Esophagus muscularis mucosa (tissue), 4 donors: ENCODE measurements at regions of chr4 and their contacts with region 1.

Region 1: DNA sequence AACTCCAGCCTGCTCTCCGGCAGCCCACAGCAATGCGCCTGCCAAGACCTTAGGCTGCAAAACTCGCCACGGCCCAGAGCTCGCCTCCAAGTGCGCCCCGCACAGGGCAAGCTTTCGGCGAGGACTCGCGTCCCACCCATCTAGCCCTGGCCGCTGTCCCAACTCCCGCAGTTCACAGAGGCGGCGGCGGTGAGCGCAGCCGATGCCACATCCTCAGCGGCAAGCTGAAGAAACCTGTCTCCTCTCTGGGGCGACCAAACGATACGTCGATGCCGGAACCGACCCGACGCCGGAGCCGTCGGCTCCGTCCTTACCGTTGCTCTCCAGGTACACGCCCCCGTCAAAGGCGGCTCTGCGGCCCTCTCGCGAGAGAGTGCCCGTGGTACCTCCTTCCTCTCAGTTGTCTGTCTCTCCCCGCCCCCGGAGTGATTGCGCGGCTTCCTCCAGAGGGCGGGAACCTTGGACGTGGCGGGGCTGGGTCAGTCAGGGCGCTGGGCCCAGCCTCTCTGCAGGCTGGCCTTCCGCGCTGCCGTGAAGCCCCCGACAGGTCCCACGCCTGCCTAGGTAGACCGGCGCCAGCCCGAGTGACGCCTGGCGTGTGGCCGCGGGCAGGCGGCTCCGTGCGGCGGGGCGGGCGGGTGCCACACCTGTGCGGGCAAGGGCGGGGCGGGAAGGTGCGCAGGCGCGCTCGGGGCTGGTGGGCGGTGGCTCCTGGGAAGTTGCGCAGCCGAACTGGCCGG is 380 bp upstream of the RAB33B start:
- DNase-seq: peak; percentile 99
- H3K4me3 ChIP-seq: peak overlapping the region; percentile 76 to 93 (median 81)
- H3K27ac ChIP-seq: peak overlapping the region; percentile 92 to 99 (median 96)
- H3K4me1 ChIP-seq: peaks cover 36 to 50% (median 49%) of the 10 kb centered on the region in 4 donors
- H3K27me3 ChIP-seq: no peaks in the 10 kb centered on the region
- CTCF ChIP-seq: peak in 1 of 3 experiments; percentile 7
- EP300 ChIP-seq: no peak
- POLR2A ChIP-seq: peak; percentile 63

Region 2: GRCh38 chr4:138707746-138708677 is 745.5 kb before region 1 on chr4:
- intact Hi-C with region 1: no loop called
- DNase-seq: no peak
- H3K4me3 ChIP-seq: no peak overlapping the region
- H3K27ac ChIP-seq: no peak overlapping the region
- H3K4me1 ChIP-seq: no peaks in the 10 kb centered on the region
- H3K27me3 ChIP-seq: no peaks in the 10 kb centered on the region
- CTCF ChIP-seq: no peak
- EP300 ChIP-seq: no peak
- POLR2A ChIP-seq: no peak

Region 3: GRCh38 chr4:139361301-139361700 is 92.2 kb before region 1 on chr4:
- intact Hi-C with region 1: no loop called
- DNase-seq: no peak
- H3K4me3 ChIP-seq: no peak overlapping the region
- H3K27ac ChIP-seq: no peak overlapping the region
- H3K4me1 ChIP-seq: no peaks in the 10 kb centered on the region
- H3K27me3 ChIP-seq: no peaks in the 10 kb centered on the region
- CTCF ChIP-seq: no peak
- EP300 ChIP-seq: no peak
- POLR2A ChIP-seq: no peak

Region 4: DNA sequence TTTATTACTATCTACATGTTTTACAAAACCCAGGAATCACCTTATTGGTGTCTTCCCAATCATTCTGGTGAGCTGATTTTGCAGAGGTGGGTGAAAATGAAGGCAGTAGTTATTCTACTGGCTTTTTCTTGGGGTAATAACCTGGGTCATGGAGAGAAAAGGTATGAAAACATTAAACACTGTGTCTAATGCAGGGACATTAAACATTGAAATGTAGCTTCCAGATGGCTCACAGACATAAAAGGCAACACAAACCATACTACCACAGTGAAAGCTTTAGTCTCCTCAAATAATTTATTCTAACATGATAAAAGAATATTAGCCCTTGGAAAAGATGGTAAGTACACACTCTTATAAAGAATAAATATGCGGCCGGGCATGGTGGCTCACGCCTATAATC is 94.4 kb after region 1 on chr4:
- intact Hi-C with region 1: loop called (anchors 5 kb)
- DNase-seq: no peak
- H3K4me3 ChIP-seq: no peak overlapping the region
- H3K27ac ChIP-seq: no peak overlapping the region
- H3K4me1 ChIP-seq: peaks cover 34 to 60% (median 48%) of the 10 kb centered on the region in 4 donors
- H3K27me3 ChIP-seq: no peaks in the 10 kb centered on the region
- CTCF ChIP-seq: no peak
- EP300 ChIP-seq: no peak
- POLR2A ChIP-seq: no peak